PC-3 (cell line): ENCODE measurements at regions of chr9 and their contacts with region 1.

Region 1: GRCh38 chr9:79571309-79572031 is at the start of gene TLE4:
- DNase-seq: peak; percentile 97
- ATAC-seq: peak; percentile 88
- H3K4me3 ChIP-seq: peak within 1 kb of the TSS; percentile 80
- H3K27ac ChIP-seq: peak within 1 kb of the TSS; percentile 22
- H3K4me1 ChIP-seq: peaks cover 12% of the 10 kb centered on the region; the same call in 1 of the 2 replicates
- H3K27me3 ChIP-seq: no peaks in the 10 kb centered on the region
- CTCF ChIP-seq: no peak
- total RNA-seq, gene TLE4: 8.3 and 17.9 TPM in 2 replicates

Region 2: GRCh38 chr9:78369639-78370219 is 1201.7 kb before region 1 on chr9:
- CTCF ChIA-PET with region 1: no interaction called
- POLR2A ChIA-PET with region 1: interaction called, 12 read pairs
- intact Hi-C with region 1: no loop called
- DNase-seq: peak; percentile 73
- ATAC-seq: peak; percentile 87
- H3K4me3 ChIP-seq: no peak overlapping the region
- H3K27ac ChIP-seq: no peak overlapping the region
- H3K4me1 ChIP-seq: no peaks in the 10 kb centered on the region; the same call in 1 of the 2 replicates
- H3K27me3 ChIP-seq: no peaks in the 10 kb centered on the region
- CTCF ChIP-seq: peak; percentile 87

Region 3: GRCh38 chr9:79489247-79489985 is 82.1 kb before region 1 on chr9:
- CTCF ChIA-PET with region 1: no interaction called
- POLR2A ChIA-PET with region 1: interaction called, 4 read pairs
- intact Hi-C with region 1: loop called (anchors 2 kb)
- DNase-seq: peak; percentile 86
- ATAC-seq: peak; percentile 90
- H3K4me3 ChIP-seq: peak overlapping the region; percentile 50
- H3K27ac ChIP-seq: peak overlapping the region; percentile 92
- H3K4me1 ChIP-seq: peaks cover 35% of the 10 kb centered on the region
- H3K27me3 ChIP-seq: no peaks in the 10 kb centered on the region
- CTCF ChIP-seq: no peak

Region 4: DNA sequence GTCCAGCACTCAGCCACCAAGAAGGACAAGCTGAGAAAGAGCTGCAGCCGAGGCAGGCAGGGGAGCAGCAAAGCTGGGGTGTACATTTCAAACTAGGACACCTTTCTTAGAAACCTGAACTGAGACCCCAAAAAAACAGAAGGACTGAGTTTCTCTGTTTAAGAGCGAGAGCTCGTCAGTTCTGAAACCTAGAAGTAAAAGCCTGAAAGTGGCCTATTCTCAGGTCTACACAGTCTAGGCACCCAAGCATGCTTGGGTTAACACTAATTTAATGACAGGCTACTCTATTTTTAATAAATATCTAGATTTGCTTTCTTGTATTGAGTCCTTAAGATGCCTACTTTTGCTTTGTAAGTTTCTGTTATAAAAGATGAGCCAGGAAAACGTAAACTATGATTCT is 48.7 kb before region 1 on chr9:
- CTCF ChIA-PET with region 1: no interaction called
- POLR2A ChIA-PET with region 1: no interaction called
- intact Hi-C with region 1: no loop called
- DNase-seq: no peak
- ATAC-seq: no peak
- H3K4me3 ChIP-seq: no peak overlapping the region
- H3K27ac ChIP-seq: no peak overlapping the region
- H3K4me1 ChIP-seq: no peaks in the 10 kb centered on the region
- H3K27me3 ChIP-seq: no peaks in the 10 kb centered on the region
- CTCF ChIP-seq: no peak

Region 5: GRCh38 chr9:79610791-79611614 is 39.5 kb after region 1 on chr9:
- CTCF ChIA-PET with region 1: no interaction called
- POLR2A ChIA-PET with region 1: no interaction called
- intact Hi-C with region 1: no loop called
- DNase-seq: peak; percentile 27
- ATAC-seq: no peak
- H3K4me3 ChIP-seq: no peak overlapping the region
- H3K27ac ChIP-seq: no peak overlapping the region
- H3K4me1 ChIP-seq: no peaks in the 10 kb centered on the region
- H3K27me3 ChIP-seq: no peaks in the 10 kb centered on the region
- CTCF ChIP-seq: no peak

Region 6: DNA sequence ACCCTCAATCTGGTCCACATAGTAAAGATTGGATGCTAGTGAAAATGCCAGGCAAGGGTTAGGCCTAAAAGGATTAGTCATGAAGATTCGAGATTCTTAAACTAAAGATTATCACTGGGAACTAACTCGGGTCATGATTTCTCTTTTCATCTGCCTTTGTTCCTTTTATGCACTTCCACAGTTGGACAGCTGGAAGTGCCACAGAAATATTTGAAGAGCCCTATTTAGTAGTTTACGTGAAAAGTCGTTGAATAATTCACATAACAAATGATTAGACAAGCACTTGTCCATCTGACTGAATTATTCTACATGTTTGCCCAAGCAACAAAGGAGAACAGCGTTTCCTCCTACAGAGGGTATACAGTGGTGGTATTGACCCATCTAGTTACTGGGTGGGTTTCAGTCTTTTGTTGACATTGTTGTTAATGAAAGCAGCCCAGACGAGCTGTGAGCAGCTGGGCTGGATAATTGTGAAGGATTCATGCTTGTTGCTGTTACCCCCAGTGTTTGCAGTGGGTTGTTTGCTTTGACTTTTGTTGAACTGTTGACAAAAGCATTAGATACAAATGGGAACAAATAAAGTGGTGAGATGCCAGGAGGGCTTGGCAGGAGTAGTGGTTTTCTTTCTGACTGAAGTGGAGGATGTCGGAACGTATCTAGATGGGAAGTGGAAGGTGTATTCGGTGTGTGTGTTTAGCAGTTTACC is 96.4 kb after region 1 on chr9:
- CTCF ChIA-PET with region 1: no interaction called
- POLR2A ChIA-PET with region 1: interaction called, 4 read pairs
- intact Hi-C with region 1: loop called (anchors 1 kb)
- DNase-seq: peak; percentile 72
- ATAC-seq: peak; percentile 20
- H3K4me3 ChIP-seq: peak overlapping the region; percentile 4; the same call in 1 of the 2 replicates
- H3K27ac ChIP-seq: peak overlapping the region; percentile 97
- H3K4me1 ChIP-seq: peaks cover 63% of the 10 kb centered on the region
- H3K27me3 ChIP-seq: no peaks in the 10 kb centered on the region
- CTCF ChIP-seq: no peak

Region 7: DNA sequence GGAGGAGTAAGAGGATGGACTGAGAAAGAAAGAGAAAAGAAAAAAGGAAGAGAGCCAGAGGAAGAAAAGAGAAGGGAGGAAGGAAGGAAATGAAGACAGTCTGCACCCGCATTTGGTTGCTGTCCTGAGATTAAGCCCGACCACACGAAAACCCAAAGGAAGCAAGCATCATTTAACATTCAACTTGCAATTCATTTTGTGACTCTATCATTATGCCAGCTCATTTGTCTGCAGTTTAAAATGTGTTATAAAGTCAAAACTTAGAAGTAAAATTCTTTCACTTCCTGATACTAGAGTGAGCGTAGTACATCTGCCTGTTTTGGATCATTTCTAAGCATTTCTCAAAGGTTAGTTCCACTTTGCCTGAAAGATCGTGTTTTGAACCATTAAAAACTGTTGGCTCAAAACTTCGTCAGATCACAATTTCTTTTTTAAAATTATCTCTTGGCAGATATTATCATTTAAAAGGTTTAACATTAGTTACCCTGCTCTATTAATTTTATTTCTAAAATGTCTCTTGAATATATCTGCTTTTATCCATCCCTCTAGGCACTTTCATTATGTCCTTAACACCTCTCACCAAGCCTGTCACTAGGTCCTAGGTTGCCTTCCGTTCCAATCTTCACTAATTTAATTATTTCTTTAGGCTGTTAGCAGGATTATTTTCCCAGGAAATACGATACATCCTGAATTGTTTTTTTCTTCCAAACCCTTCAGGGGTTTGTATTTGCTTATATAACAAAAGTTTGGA is 241.2 kb after region 1 on chr9:
- CTCF ChIA-PET with region 1: no interaction called
- POLR2A ChIA-PET with region 1: no interaction called
- intact Hi-C with region 1: loop called (anchors 5 kb)
- DNase-seq: no peak
- ATAC-seq: no peak
- H3K4me3 ChIP-seq: no peak overlapping the region
- H3K27ac ChIP-seq: no peak overlapping the region
- H3K4me1 ChIP-seq: peaks cover 24% of the 10 kb centered on the region
- H3K27me3 ChIP-seq: no peaks in the 10 kb centered on the region
- CTCF ChIP-seq: no peak

Region 8: DNA sequence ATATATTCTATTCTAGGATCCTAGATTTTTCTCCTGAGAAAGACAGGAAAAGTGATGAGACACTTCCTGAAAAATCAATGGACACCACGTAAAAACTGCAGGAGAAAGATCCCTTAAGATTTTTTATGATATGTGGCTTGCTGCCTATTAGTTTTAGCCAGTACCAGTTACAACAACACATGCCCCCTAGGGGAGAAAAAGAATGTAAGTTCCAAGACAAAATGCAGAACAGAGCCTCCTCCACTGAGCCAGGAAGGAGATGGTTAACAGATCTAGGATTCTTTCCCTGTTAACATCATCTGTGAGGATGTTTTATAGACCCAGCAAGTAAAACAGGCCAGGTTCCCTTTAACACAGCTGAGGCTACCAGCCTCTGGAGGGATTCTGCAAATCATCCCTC is 575.0 kb after region 1 on chr9:
- CTCF ChIA-PET with region 1: no interaction called
- POLR2A ChIA-PET with region 1: no interaction called
- intact Hi-C with region 1: loop called (anchors 10 kb)
- DNase-seq: peak; percentile 13
- ATAC-seq: no peak
- H3K4me3 ChIP-seq: no peak overlapping the region
- H3K27ac ChIP-seq: no peak overlapping the region
- H3K4me1 ChIP-seq: peaks cover 16% of the 10 kb centered on the region
- H3K27me3 ChIP-seq: no peaks in the 10 kb centered on the region
- CTCF ChIP-seq: peak; percentile 47